ENCODE measurements at regions of chr19 and their contacts with region 1.

Region 1: GRCh38 chr19:46542428-46543230 is 47.0 kb upstream of the PNMA8B start:
- DNase-seq: peak; percentile 96
- H3K4me3 ChIP-seq: no peak overlapping the region
- H3K27ac ChIP-seq: no peak overlapping the region
- H3K4me1 ChIP-seq: peaks cover 0 to 8% (median 0%) of the 10 kb centered on the region in 4 donors
- H3K27me3 ChIP-seq: no peaks in the 10 kb centered on the region
- CTCF ChIP-seq: peak; percentile 72 to 91 (median 88)
- EP300 ChIP-seq: no peak
- POLR2A ChIP-seq: no peak

Region 2: GRCh38 chr19:46265217-46265828 is 277.3 kb before region 1 on chr19:
- intact Hi-C with region 1: no loop called
- DNase-seq: peak; percentile 76
- H3K4me3 ChIP-seq: no peak overlapping the region
- H3K27ac ChIP-seq: no peak overlapping the region
- H3K4me1 ChIP-seq: no peaks in the 10 kb centered on the region
- H3K27me3 ChIP-seq: peaks cover 0 to 13% (median 0%) of the 10 kb centered on the region in 3 donors
- CTCF ChIP-seq: peak; percentile 77 to 94 (median 82)
- EP300 ChIP-seq: no peak
- POLR2A ChIP-seq: no peak

Region 3: GRCh38 chr19:46529622-46530462 is 12.8 kb before region 1 on chr19:
- intact Hi-C with region 1: loop called (anchors 1 kb)
- DNase-seq: peak; percentile 78
- H3K4me3 ChIP-seq: no peak overlapping the region
- H3K27ac ChIP-seq: no peak overlapping the region
- H3K4me1 ChIP-seq: peaks cover 0 to 9% (median 0%) of the 10 kb centered on the region in 4 donors
- H3K27me3 ChIP-seq: peaks cover 0 to 22% (median 0%) of the 10 kb centered on the region in 3 donors
- CTCF ChIP-seq: peak; percentile 67 to 87 (median 86)
- EP300 ChIP-seq: no peak
- POLR2A ChIP-seq: no peak

Measured in sigmoid colon (tissue), 7 donors.